ENCODE measurements at regions of chr4 and their contacts with region 1.

Region 1: DNA sequence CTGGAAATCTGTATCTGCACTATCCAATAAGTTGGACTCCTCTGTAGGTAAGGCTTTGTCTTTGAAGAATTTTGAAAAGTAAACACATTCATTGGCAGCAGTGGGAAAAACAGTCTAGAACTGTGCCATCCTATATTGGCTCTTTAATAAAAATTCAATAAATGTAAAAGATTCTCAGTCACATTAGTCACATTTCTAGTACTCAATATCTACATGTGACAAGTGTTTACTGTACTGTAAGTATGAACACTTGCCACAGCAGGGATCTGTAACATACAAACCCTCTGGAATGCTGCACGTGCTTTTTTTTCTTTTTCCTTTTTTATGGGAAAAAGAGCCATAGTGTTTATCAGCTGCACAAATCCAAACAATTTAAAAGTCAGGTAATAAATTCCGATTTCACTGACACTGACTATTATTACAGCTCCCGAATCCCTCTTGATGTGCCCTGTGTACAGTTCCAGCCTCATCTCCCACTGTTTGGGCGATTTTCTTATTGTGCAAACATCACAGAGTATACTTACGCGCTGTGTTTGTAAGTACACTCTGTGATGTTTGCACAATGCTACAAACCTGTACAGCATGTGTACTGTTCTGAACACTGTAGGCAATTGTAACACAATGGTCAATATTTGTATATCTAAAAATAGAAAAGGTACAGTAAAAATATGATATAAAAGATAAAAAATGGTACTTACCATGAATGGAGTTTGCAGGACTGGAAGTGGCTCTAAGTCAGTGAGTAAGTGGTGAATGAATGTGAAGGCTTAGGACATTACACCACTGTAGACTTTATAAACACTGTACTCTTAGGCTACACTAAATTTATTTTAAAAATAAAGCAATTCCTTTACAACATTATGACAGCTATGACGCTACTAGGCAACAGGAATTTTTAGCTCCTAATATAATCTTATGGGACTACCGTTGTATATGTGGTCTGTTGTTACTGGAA is 8.7 kb downstream of the PYURF start:
- DNase-seq: peak; percentile 28
- ATAC-seq: peak; percentile 64
- H3K4me3 ChIP-seq: no peak overlapping the region
- H3K27ac ChIP-seq: no peak overlapping the region
- H3K4me1 ChIP-seq: peaks cover 9% of the 10 kb centered on the region; the same call in 1 of the 2 replicates
- H3K27me3 ChIP-seq: no peaks in the 10 kb centered on the region
- CTCF ChIP-seq: no peak

Region 2: GRCh38 chr4:87848622-87849351 is 666.0 kb before region 1 on chr4:
- CTCF ChIA-PET with region 1: no interaction called
- POLR2A ChIA-PET with region 1: no interaction called
- intact Hi-C with region 1: loop called (anchors 5 kb)
- DNase-seq: peak; percentile 55
- ATAC-seq: peak; percentile 90
- H3K4me3 ChIP-seq: peak overlapping the region; percentile 62
- H3K27ac ChIP-seq: no peak overlapping the region
- H3K4me1 ChIP-seq: peaks cover 12% of the 10 kb centered on the region
- H3K27me3 ChIP-seq: no peaks in the 10 kb centered on the region
- CTCF ChIP-seq: peak; percentile 66; the same call in 1 of the 2 replicates

Region 3: DNA sequence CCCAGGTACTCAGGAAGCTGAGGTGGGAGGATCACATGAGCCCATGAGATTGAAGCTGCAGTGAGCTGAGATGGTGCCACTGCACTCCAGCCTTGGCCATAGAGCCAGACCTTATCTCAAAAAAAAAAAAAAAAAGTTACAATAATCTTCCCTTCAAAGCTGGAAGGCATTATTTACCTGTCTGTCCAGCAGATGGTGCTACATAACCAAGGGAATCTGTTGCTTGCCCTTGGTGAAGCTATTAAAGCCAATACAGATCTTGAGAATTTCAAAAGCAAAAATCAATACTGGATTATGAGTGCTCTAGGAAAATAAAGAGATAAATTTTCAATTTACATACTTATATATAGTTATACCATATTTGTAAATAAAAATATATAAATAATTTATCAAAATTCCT is 481.5 kb before region 1 on chr4:
- CTCF ChIA-PET with region 1: no interaction called
- POLR2A ChIA-PET with region 1: no interaction called
- intact Hi-C with region 1: loop called (anchors 5 kb)
- DNase-seq: peak; percentile 74
- ATAC-seq: no peak
- H3K4me3 ChIP-seq: no peak overlapping the region
- H3K27ac ChIP-seq: no peak overlapping the region
- H3K4me1 ChIP-seq: peaks cover 23% of the 10 kb centered on the region
- H3K27me3 ChIP-seq: no peaks in the 10 kb centered on the region
- CTCF ChIP-seq: peak; percentile 60

Region 4: DNA sequence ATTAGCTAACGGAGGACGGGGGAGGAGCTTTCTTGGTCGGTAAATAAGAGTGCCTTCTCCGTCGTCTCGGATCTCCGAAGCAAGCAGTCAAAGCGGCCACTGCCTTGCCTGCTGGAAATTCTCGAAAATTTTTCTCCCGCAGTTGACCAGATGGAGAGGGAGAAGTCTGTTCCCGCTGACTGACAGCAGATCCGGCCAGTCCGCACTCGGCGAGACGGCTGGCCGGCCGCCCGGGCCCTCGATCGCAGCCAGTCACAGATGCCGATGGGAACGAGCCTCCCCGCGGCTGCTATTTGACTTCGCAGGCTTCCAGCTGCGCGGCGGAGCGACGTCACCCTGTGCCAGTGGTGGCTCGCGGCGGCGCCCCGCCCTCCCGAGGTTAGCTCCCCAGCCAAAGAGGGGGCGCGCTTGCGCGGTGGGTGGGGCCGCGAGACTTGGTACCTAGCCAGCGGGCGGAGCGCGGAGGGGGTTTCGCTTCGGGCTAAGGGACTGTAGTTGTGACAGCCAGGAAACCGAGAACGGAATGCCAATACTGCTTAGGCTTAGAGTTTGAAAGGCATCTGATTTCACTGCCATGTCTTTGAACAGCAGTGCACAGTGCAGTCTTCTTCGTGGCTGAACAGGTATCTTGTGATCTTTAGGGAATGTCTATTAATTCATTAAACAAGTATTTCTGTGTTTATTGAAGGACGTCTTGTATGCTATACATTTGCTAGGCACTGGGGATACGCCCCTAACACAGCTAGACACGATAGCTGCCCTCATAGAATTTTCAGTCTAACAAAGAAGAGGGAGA is 230.2 kb before region 1 on chr4 and contains the start of gene PPM1K:
- CTCF ChIA-PET with region 1: no interaction called
- POLR2A ChIA-PET with region 1: no interaction called
- intact Hi-C with region 1: loop called (anchors 2 kb)
- DNase-seq: peak; percentile 96
- ATAC-seq: peak; percentile 91
- H3K4me3 ChIP-seq: peak within 1 kb of the TSS; percentile 88
- H3K27ac ChIP-seq: peak within 1 kb of the TSS; percentile 68
- H3K4me1 ChIP-seq: peaks cover 21% of the 10 kb centered on the region
- H3K27me3 ChIP-seq: no peaks in the 10 kb centered on the region
- CTCF ChIP-seq: no peak
- total RNA-seq, gene PPM1K: 3.0 and 5.7 TPM in 2 replicates

Region 5: GRCh38 chr4:88366460-88366859 is 148.4 kb before region 1 on chr4:
- CTCF ChIA-PET with region 1: interaction called, 6 read pairs
- POLR2A ChIA-PET with region 1: no interaction called
- intact Hi-C with region 1: loop called (anchors 1 kb)
- DNase-seq: no peak
- ATAC-seq: no peak
- H3K4me3 ChIP-seq: no peak overlapping the region
- H3K27ac ChIP-seq: no peak overlapping the region
- H3K4me1 ChIP-seq: no peaks in the 10 kb centered on the region
- H3K27me3 ChIP-seq: no peaks in the 10 kb centered on the region
- CTCF ChIP-seq: no peak

Region 6: GRCh38 chr4:88378691-88379559 is 135.9 kb before region 1 on chr4 and contains the start of gene HERC6:
- CTCF ChIA-PET with region 1: interaction called, 5 read pairs
- POLR2A ChIA-PET with region 1: no interaction called
- intact Hi-C with region 1: loop called (anchors 1 kb)
- DNase-seq: peak; percentile 71
- ATAC-seq: peak; percentile 96
- H3K4me3 ChIP-seq: peak within 1 kb of the TSS; percentile 97
- H3K27ac ChIP-seq: peak within 1 kb of the TSS; percentile 58
- H3K4me1 ChIP-seq: no peaks in the 10 kb centered on the region
- H3K27me3 ChIP-seq: no peaks in the 10 kb centered on the region
- CTCF ChIP-seq: peak; percentile 64
- total RNA-seq, gene HERC6: 4.8 and 7.2 TPM in 2 replicates

Region 7: GRCh38 chr4:88456757-88457306 is 58.0 kb before region 1 on chr4 and contains the start of gene HERC5:
- CTCF ChIA-PET with region 1: interaction called, 3 read pairs
- POLR2A ChIA-PET with region 1: no interaction called
- intact Hi-C with region 1: loop called (anchors 2 kb)
- DNase-seq: peak; percentile 85
- ATAC-seq: peak; percentile 93
- H3K4me3 ChIP-seq: peak within 1 kb of the TSS; percentile 69
- H3K27ac ChIP-seq: no peak within 1 kb of the TSS
- H3K4me1 ChIP-seq: no peaks in the 10 kb centered on the region
- H3K27me3 ChIP-seq: no peaks in the 10 kb centered on the region
- CTCF ChIP-seq: peak; percentile 64
- total RNA-seq, gene HERC5: 2.6 and 3.2 TPM in 2 replicates

Region 8: DNA sequence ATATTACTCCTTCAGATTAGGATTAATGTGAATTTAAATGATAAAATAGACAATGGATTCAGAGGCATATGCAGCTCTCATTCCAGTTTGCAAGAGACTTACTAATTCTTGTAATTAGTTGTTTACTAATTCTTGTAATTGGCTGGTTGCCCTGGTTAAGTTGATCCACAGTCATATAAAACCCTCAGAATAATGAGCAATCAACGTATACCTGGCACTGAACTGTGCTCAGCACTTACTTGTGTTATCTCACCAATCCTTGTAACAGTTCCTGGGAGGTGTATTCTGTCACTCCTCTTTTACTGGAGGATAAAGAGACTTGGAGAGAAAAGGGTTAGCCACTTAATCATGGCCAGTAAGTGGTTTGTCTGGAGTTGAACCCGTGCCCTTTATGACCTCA is 47.4 kb before region 1 on chr4:
- CTCF ChIA-PET with region 1: no interaction called
- POLR2A ChIA-PET with region 1: no interaction called
- intact Hi-C with region 1: no loop called
- DNase-seq: no peak
- ATAC-seq: no peak
- H3K4me3 ChIP-seq: no peak overlapping the region
- H3K27ac ChIP-seq: no peak overlapping the region
- H3K4me1 ChIP-seq: no peaks in the 10 kb centered on the region
- H3K27me3 ChIP-seq: no peaks in the 10 kb centered on the region
- CTCF ChIP-seq: no peak